ENCODE measurements at regions of chr2 and their contacts with region 1.

Region 1: DNA sequence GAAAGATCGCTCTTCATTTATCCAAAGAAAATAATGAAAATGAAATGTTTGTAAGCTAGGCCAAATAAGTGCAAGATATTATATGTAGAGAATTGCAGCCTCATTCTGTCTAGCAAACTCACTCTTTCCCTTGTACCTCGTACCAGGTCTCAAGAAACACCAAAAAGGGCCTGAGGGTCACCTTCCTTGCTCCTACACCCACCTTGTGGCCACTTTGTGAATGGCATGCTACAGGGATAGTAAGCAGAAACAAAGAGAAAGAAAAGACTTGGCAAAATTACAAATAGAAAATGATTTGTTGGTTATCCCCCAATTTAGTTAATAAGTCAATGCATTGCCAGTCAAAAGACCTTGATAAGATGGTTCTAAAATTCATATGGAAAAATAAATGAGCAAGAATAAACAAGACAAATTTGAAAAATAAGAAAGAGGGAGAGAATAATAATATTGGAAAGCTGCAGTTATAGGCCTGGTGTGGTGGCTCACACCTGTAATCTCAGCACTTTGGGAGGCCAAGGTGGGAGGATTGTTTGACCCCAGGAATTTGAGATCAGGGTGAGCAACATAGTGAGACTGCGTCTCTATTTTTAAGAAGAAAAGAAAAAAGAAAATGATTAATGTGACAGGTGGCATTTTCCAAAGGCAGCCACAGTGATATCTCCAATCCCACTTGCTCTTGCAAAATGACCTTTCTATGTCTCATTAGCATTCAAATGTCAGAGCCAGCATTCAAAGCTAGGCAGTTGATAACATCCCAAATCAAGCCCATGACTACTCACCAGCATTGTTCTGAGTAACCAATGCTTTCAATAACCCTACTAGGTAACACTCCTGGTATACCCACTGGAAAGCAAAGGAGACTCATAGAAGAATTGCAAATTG is 38.8 kb upstream of the BMP10 start:
- DNase-seq: peak in 1 of 2 donors; percentile 86
- H3K4me3 ChIP-seq: no peak overlapping the region
- H3K27ac ChIP-seq: no peak overlapping the region
- H3K4me1 ChIP-seq: peaks cover 3 to 12% of the 10 kb centered on the region in 2 donors
- H3K27me3 ChIP-seq: no peaks in the 10 kb centered on the region
- CTCF ChIP-seq: peak; percentile 70 to 94 (median 89)

Region 2: GRCh38 chr2:68709421-68709911 is 200.6 kb before region 1 on chr2:
- intact Hi-C with region 1: loop called (anchors 2 kb)
- DNase-seq: no peak
- H3K4me3 ChIP-seq: no peak overlapping the region
- H3K27ac ChIP-seq: no peak overlapping the region
- H3K4me1 ChIP-seq: peaks cover 0 to 5% of the 10 kb centered on the region in 2 donors
- H3K27me3 ChIP-seq: no peaks in the 10 kb centered on the region
- CTCF ChIP-seq: peak in 2 of 3 experiments; percentile 46 to 72

Region 3: GRCh38 chr2:68832233-68832869 is 77.7 kb before region 1 on chr2:
- intact Hi-C with region 1: loop called (anchors 5 kb)
- DNase-seq: peak; percentile 70 to 94
- H3K4me3 ChIP-seq: no peak overlapping the region
- H3K27ac ChIP-seq: peak overlapping the region; percentile 95 to 97
- H3K4me1 ChIP-seq: peaks cover 28 to 45% of the 10 kb centered on the region in 2 donors
- H3K27me3 ChIP-seq: no peaks in the 10 kb centered on the region
- CTCF ChIP-seq: no peak